ENCODE measurements at regions of chr7 and their contacts with region 1.

Region 1: GRCh38 chr7:100642534-100642907 is 1.2 kb upstream of the TFR2 start:
- DNase-seq: peak; percentile 75
- H3K4me3 ChIP-seq: no peak overlapping the region
- H3K27ac ChIP-seq: no peak overlapping the region
- H3K4me1 ChIP-seq: peaks cover 0 to 9% of the 10 kb centered on the region in 2 experiments; a peak in 1 of 4 replicates
- H3K27me3 ChIP-seq: peaks cover 7% of the 10 kb centered on the region; the same call in 1 of the 2 replicates
- CTCF ChIP-seq: no peak
- EP300 ChIP-seq: no peak
- RAD21 ChIP-seq: no peak

Region 2: DNA sequence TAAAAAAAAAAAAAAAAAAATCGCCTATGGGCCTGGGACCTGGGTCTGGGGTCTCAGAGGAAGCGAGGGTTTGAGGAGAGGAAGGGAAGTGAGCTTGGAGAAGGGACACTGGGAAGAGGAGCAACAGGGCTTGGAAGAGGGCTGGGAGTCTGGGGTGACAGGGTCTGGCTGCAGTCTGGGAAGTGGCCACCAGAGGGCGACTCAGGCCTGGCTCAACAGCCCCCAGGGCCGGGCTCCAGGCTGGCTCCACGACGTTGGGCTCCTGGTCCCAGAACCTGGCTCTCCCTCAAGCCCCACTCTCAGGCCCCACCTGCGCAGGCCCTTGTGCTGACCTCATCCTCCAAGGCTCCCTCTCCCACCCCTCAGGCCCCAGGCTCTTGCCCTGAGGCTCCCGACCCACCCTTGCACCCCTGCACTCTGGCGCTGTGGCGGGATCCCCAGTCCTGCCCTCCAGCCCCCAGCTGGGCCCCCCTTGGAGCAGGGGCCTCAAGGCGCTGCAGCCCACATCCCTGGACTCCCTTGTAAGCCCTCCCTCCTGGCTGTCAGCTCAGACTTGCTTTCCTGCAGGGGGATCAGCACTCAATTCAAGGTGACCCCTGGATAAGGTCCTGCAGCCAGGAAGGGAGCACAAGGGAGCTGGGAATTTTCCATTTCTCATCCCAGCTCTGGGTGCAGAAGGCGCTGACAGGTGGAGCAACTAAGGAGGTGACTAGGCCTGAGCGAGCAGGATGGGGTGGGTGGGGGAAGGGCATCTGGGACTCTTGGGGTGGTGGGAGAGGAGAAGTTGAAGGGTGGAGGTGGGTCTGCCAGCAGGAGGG is 173.1 kb before region 1 on chr7:
- CTCF ChIA-PET with region 1: no interaction called
- POLR2A ChIA-PET with region 1: no interaction called
- DNase-seq: peak; percentile 98
- H3K4me3 ChIP-seq: no peak overlapping the region; a peak in 1 of 4 replicates
- H3K27ac ChIP-seq: no peak overlapping the region; a peak in 1 of 4 replicates
- H3K4me1 ChIP-seq: peaks cover 3 to 15% of the 10 kb centered on the region in 2 experiments; a peak in 3 of 4 replicates
- H3K27me3 ChIP-seq: no peaks in the 10 kb centered on the region
- CTCF ChIP-seq: peak; percentile 98
- EP300 ChIP-seq: no peak
- RAD21 ChIP-seq: peak; percentile 97

Region 3: DNA sequence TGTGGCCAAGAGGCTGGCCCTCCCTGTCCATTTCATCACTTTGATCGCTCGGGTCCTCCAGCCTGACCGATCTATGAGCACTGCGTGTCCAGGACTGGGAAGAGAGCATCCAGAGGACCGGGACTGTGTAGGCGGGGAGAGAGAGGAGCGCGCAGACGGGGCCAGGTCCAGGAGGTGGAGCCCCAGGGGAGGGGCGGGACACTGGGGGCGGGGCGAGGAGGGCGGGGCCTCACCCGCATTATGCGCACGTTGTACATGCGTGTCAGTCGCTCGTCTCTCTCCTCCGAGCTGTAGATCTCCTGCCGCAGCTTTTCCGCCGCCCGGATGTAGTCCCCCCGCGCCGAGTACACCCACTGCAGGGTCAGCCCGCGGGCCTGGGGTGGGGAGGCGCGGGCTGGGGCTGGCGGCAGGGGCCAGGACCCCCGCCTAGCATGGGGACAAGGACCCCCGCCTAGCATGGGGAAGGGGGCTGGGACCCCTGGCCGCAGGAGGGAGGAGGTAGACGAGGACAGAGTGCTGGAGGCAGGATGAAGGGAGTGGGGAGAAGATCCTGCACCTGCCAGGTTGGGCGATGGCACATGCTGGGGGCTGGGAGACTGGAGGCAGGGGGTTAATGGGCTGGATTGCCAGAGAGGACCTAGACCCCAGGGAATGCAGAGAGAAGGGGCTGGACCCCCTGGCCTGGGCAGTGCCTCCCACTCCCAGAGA is 15.8 kb before region 1 on chr7:
- CTCF ChIA-PET with region 1: interaction called, 19 read pairs
- POLR2A ChIA-PET with region 1: interaction called, 5 read pairs
- DNase-seq: peak; percentile 100
- H3K4me3 ChIP-seq: peak overlapping the region; percentile 36 to 58
- H3K27ac ChIP-seq: peak overlapping the region in 1 of 2 experiments; percentile 20; a peak in 1 of 4 replicates
- H3K4me1 ChIP-seq: peaks cover 0 to 10% of the 10 kb centered on the region in 2 experiments; a peak in 1 of 4 replicates
- H3K27me3 ChIP-seq: no peaks in the 10 kb centered on the region
- CTCF ChIP-seq: no peak
- EP300 ChIP-seq: no peak
- RAD21 ChIP-seq: no peak

Region 4: DNA sequence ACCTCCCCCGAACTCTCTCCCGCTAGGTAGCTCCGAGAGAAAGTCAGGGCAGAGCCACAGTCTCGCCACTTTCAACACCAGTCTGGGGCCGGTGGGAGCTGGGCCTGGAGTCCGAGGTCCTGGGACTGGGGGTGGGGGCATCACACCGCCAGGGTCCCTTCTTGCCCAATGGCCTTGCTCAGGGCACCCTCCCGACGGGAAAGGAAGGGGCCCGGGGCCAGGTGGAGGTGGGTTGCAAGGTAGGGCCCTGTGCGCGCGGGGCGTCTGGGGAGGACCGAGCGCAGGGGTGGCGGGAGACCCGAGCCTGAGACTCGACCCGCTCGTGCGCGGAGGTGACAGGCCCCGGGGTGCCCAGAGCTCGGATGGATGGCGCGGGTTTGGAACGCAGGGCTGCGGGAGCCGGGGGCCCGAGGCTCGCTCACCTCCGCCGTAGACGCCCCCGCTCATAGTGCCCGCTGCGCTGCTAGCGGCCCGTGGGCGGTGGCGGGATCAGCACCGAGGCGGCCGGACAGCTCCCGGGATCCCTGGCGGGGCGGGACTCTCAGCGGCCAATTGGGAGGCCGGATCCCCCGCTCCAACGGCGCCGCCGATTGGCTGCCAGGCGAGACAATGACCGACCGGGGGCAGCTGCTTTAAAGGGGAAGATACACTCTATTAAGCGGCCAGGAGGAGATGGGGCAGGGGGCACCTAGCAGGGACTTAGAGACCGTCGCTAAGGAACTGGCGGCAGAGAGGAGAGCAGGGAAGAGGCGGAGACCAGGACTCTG is 13.6 kb after region 1 on chr7 and contains the start of gene ACTL6B:
- CTCF ChIA-PET with region 1: interaction called, 13 read pairs
- POLR2A ChIA-PET with region 1: no interaction called
- DNase-seq: peak; percentile 100
- H3K4me3 ChIP-seq: peak within 1 kb of the TSS in 1 of 2 experiments; percentile 46; a peak in 2 of 4 replicates
- H3K27ac ChIP-seq: peak within 1 kb of the TSS in 1 of 2 experiments; percentile 40; a peak in 1 of 4 replicates
- H3K4me1 ChIP-seq: peaks cover 0 to 6% of the 10 kb centered on the region in 2 experiments; a peak in 1 of 4 replicates
- H3K27me3 ChIP-seq: peaks cover 17% of the 10 kb centered on the region; the same call in 1 of the 2 replicates
- CTCF ChIP-seq: no peak
- EP300 ChIP-seq: no peak
- RAD21 ChIP-seq: no peak
- polyA plus RNA-seq, gene ACTL6B: 0.67 and 0.93 TPM in 2 replicates